ENCODE measurements at regions of chr4 and their contacts with region 1.

Region 1: GRCh38 chr4:70183168-70183939 is 12.2 kb upstream of the ODAM start:
- DNase-seq: peak in 1 of 2 experiments; percentile 7
- H3K4me3 ChIP-seq: no peak overlapping the region
- H3K27ac ChIP-seq: no peak overlapping the region
- H3K4me1 ChIP-seq: no peaks in the 10 kb centered on the region
- H3K27me3 ChIP-seq: no peaks in the 10 kb centered on the region
- CTCF ChIP-seq: peak; percentile 69

Region 2: GRCh38 chr4:69322055-69322454 is 861.3 kb before region 1 on chr4:
- CTCF ChIA-PET with region 1: no interaction called
- POLR2A ChIA-PET with region 1: no interaction called
- intact Hi-C with region 1: loop called (anchors 5 kb)
- DNase-seq: no peak
- H3K4me3 ChIP-seq: no peak overlapping the region
- H3K27ac ChIP-seq: no peak overlapping the region
- H3K4me1 ChIP-seq: no peaks in the 10 kb centered on the region
- H3K27me3 ChIP-seq: no peaks in the 10 kb centered on the region
- CTCF ChIP-seq: no peak

Region 3: GRCh38 chr4:69896530-69897116 is 286.7 kb before region 1 on chr4:
- CTCF ChIA-PET with region 1: interaction called, 3 read pairs
- POLR2A ChIA-PET with region 1: no interaction called
- intact Hi-C with region 1: loop called (anchors 2 kb)
- DNase-seq: no peak
- H3K4me3 ChIP-seq: no peak overlapping the region
- H3K27ac ChIP-seq: no peak overlapping the region
- H3K4me1 ChIP-seq: no peaks in the 10 kb centered on the region
- H3K27me3 ChIP-seq: no peaks in the 10 kb centered on the region
- CTCF ChIP-seq: peak; percentile 58

Region 4: DNA sequence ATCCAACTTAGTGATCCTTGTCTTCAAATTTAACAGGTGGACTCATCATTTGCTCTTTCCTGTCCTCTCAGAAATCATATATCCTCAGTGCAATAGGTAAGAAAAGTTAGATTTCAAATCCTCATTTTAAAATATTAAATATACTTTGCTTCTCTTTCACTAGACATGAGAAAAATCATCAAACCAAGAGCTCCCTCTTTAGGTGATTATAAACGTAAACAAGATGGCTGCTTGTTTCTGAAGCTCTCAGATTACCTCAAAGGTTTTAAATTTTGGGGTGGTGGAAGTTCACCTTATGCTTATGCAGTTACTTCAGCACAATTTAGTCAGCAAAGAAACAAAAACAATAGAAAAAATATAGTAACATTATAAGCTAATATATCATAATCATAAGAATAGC is 86.3 kb after region 1 on chr4:
- CTCF ChIA-PET with region 1: interaction called, 5 read pairs
- POLR2A ChIA-PET with region 1: no interaction called
- intact Hi-C with region 1: loop called (anchors 1 kb)
- DNase-seq: no peak
- H3K4me3 ChIP-seq: no peak overlapping the region
- H3K27ac ChIP-seq: no peak overlapping the region
- H3K4me1 ChIP-seq: no peaks in the 10 kb centered on the region
- H3K27me3 ChIP-seq: no peaks in the 10 kb centered on the region
- CTCF ChIP-seq: peak; percentile 35; the same call in 1 of the 2 replicates